Panc1 (cell line): ENCODE measurements at regions of chr4 and their contacts with region 1.

Region 1: GRCh38 chr4:188218392-188218791 is 79.2 kb downstream of the TRIML1 start:
- DNase-seq: no peak
- ATAC-seq: no peak
- H3K4me3 ChIP-seq: no peak overlapping the region
- H3K27ac ChIP-seq: no peak overlapping the region
- H3K4me1 ChIP-seq: no peaks in the 10 kb centered on the region
- H3K27me3 ChIP-seq: no peaks in the 10 kb centered on the region
- CTCF ChIP-seq: no peak

Region 2: DNA sequence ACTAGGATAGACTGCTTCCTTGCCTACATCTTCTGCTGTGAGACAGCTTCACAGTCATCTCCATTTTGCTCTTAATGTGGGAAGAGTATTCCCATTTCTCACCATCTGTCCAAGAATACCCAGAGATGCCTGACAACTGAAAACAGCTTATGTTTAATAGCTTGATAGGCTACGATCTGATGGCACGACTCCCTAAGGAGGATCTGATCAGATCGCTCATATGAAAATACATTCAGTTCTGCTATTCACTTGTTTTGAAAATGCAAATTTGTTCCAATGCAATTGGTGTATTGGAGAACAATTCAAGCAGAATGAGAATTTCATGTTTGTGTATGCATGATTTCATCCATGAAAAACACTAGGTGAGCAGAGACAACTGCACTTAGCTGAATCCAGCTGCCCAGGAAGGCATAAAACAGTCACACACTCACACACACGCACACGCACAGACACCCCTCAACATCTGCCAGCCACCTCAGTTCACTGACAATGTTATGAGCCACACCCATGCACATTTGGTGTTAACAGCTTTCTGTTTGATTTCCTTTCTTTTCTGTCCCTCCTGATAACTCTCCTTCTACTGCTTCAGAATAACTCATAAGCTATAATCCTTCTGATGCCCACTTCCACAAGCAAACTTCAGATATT is 49.5 kb before region 1 on chr4:
- CTCF ChIA-PET with region 1: no interaction called
- POLR2A ChIA-PET with region 1: interaction called, 11 read pairs
- in situ Hi-C with region 1: no loop called
- intact Hi-C with region 1: no loop called
- DNase-seq: no peak
- ATAC-seq: no peak
- H3K4me3 ChIP-seq: no peak overlapping the region
- H3K27ac ChIP-seq: no peak overlapping the region
- H3K4me1 ChIP-seq: no peaks in the 10 kb centered on the region
- H3K27me3 ChIP-seq: no peaks in the 10 kb centered on the region
- CTCF ChIP-seq: no peak